AG04450 (cell line): ENCODE measurements at regions of chr7 and their contacts with region 1.

Region 1: DNA sequence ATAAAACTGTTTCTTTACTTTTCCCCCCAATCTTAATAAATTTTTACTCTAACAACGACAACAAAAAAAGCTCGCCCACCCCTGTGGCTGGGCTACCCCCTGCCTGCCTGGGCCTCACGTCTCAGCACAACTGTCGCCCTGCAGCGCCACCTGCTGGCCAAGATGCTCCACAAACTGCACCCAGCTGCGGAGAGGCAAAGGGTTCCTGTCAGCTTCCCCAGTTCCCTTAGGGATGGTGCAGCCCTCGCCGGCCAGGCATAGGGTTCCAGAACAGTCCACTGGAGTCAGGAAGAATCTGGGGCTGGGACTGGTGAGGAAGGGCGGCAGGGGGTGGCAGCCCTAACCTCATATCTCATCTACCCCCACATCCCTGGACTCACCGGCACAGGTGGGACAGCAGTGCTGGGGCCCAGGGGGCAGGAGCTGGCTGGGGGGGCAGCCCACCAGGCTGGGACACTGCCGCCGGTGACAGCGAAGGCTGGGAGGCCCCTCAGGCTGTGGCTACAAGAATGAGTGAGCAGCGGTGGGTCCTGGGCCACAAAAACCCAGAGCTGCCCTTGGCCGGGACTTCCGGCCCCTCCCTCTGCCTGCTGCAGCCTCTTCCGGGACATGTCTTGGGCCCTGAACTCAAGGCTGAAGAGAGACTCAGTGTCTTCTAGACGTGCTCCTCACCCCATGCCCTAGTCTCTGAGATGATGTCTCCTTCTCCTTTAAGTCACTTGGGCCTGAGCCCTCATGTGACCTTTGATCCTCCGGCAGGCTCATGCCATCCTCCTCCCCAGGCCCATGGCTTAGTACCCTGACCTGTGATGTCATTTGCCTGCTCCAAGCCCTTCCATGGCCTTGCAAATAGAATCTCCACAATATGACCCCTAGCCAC is 21.2 kb downstream of the ATP6V1F start:
- DNase-seq: no peak
- H3K4me3 ChIP-seq: no peak overlapping the region
- H3K27ac ChIP-seq: no peak overlapping the region
- H3K27me3 ChIP-seq: no peaks in the 10 kb centered on the region
- CTCF ChIP-seq: peak; percentile 85

Region 2: GRCh38 chr7:128862571-128863432 is 21.1 kb before region 1 on chr7 and contains the start of gene ATP6V1F:
- CTCF ChIA-PET with region 1: interaction called, 28 read pairs
- POLR2A ChIA-PET with region 1: interaction called, 3 read pairs
- DNase-seq: peak; percentile 92
- H3K4me3 ChIP-seq: peak within 1 kb of the TSS; percentile 98
- H3K27ac ChIP-seq: peak within 1 kb of the TSS; percentile 73
- H3K27me3 ChIP-seq: no peaks in the 10 kb centered on the region
- CTCF ChIP-seq: no peak
- polyA plus RNA-seq, gene ATP6V1F: 150 and 193 TPM in 2 replicates

Region 3: GRCh38 chr7:129017933-129018538 is 134.2 kb after region 1 on chr7:
- CTCF ChIA-PET with region 1: no interaction called
- POLR2A ChIA-PET with region 1: no interaction called
- DNase-seq: no peak
- H3K4me3 ChIP-seq: no peak overlapping the region
- H3K27ac ChIP-seq: no peak overlapping the region
- H3K27me3 ChIP-seq: no peaks in the 10 kb centered on the region
- CTCF ChIP-seq: no peak